ENCODE measurements at regions of chr3 and their contacts with region 1.

Region 1: GRCh38 chr3:139378587-139379241 is 10.7 kb downstream of the COPB2 start:
- DNase-seq: no peak
- H3K4me3 ChIP-seq: no peak overlapping the region
- CTCF ChIP-seq: no peak

Region 2: GRCh38 chr3:139024968-139025367 is 353.7 kb before region 1 on chr3:
- CTCF ChIA-PET with region 1: no interaction called
- POLR2A ChIA-PET with region 1: no interaction called
- DNase-seq: no peak
- H3K4me3 ChIP-seq: no peak overlapping the region
- CTCF ChIP-seq: no peak

Region 3: DNA sequence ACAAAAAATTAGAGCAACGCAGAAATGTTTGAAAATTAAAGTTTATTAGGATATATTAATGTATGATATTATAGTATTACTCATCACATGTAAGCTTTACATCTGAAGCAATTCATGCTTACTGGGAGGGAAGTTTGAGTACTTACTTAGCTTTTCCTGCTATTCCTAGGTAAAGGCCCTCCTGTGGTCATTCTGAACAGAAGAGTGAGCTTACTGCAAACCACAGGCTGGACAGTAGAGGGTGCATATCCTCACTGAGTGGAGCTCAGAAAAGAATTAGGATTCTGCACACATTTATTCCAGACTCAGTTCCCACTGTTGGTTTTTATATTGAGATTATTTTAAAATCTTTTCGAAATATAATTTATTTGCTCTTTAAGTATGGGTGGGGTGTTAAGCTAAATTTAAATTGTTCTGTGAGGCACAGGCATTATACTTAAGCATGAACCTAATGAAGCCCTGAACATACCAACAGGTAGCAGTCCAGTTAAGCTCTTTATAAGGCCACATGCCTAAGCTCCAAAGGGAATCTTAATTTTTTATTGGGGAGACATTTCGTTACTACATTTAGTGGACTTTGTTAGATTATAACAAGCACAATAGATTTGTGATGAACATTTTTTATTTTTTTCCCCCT is 24.7 kb before region 1 on chr3:
- CTCF ChIA-PET with region 1: interaction called, 62 read pairs
- POLR2A ChIA-PET with region 1: no interaction called
- DNase-seq: peak; percentile 7
- H3K4me3 ChIP-seq: no peak overlapping the region
- CTCF ChIP-seq: peak; percentile 85

Region 4: DNA sequence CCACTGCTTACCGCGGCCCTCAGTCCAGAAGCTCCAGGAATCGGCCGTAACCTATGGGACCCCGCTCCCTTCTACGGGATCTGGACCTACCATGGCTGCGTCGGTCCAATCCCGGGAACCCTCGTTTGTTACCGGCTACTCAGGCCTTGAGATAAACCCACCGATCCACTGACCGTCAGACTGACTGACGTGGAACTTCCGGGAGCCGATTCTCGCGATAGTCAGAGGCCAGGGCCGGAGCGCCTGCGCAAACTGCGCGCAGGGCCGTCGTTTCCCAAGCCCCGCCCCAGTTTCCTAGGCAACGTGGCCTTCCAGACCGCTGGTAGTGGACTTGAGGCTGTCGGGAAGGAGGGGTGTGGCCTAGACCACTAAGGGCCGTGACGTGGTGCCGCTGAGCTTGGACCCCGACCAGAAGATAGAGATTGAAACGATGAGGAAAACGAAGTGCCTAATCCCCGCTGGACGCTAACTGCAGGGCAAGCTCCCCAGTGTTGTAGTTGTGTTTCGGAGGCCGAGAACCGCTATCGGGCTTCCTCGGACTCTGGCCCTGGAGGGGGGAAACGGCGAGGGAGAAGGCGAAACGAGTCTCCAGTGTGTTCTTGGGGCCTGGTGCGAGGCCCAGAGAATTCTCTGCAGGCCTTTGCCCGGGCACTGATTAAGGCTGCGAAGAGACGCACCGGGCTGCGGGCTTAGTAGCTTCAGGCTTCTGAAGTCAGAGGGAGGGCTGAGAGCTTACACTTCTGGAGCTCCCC is 10.9 kb after region 1 on chr3 and contains the start of gene COPB2:
- CTCF ChIA-PET with region 1: interaction called, 10 read pairs
- POLR2A ChIA-PET with region 1: interaction called, 3 read pairs
- DNase-seq: peak; percentile 94
- H3K4me3 ChIP-seq: peak within 1 kb of the TSS; percentile 97
- CTCF ChIP-seq: no peak

Region 5: GRCh38 chr3:139421460-139421859 is 42.7 kb after region 1 on chr3:
- CTCF ChIA-PET with region 1: no interaction called
- POLR2A ChIA-PET with region 1: no interaction called
- DNase-seq: no peak
- H3K4me3 ChIP-seq: no peak overlapping the region
- CTCF ChIP-seq: no peak

Measured in AG04449 (cell line).